Transverse colon (tissue), 4 donors: ENCODE measurements at regions of chr5 and their contacts with region 1.

Region 1: GRCh38 chr5:158943057-158943456 is 156.7 kb downstream of the EBF1 start:
- DNase-seq: no peak
- H3K4me3 ChIP-seq: no peak overlapping the region
- H3K27ac ChIP-seq: no peak overlapping the region
- H3K4me1 ChIP-seq: no peaks in the 10 kb centered on the region
- H3K27me3 ChIP-seq: no peaks in the 10 kb centered on the region
- CTCF ChIP-seq: no peak
- EP300 ChIP-seq: no peak
- POLR2A ChIP-seq: no peak

Region 2: GRCh38 chr5:157961828-157962590 is 981.0 kb before region 1 on chr5:
- in situ Hi-C with region 1: no loop called
- intact Hi-C with region 1: loop called (anchors 5 kb)
- DNase-seq: no peak
- H3K4me3 ChIP-seq: no peak overlapping the region
- H3K27ac ChIP-seq: no peak overlapping the region
- H3K4me1 ChIP-seq: no peaks in the 10 kb centered on the region
- H3K27me3 ChIP-seq: no peaks in the 10 kb centered on the region
- CTCF ChIP-seq: no peak
- EP300 ChIP-seq: no peak
- POLR2A ChIP-seq: no peak

Region 3: DNA sequence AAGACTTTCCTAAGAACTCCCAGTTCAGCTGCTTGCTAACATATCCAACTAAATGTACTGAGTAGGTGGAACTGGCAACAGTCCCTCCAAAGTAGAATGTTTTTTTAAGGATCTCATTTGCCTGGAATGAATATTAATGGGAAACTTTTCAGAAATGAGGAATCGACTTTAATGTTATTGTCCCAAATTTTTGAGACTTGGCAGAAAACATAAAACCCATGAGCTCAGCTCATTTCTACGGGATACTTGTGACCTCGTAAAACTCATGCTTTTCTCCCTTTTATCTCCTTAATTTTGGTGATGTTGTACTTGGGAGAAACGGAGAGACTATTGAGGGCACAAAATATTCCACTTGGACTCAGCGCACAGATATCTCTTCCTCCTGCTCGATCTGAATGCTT is 140.1 kb before region 1 on chr5:
- in situ Hi-C with region 1: no loop called
- intact Hi-C with region 1: no loop called
- DNase-seq: no peak
- H3K4me3 ChIP-seq: no peak overlapping the region
- H3K27ac ChIP-seq: no peak overlapping the region
- H3K4me1 ChIP-seq: no peaks in the 10 kb centered on the region
- H3K27me3 ChIP-seq: no peaks in the 10 kb centered on the region
- CTCF ChIP-seq: no peak
- EP300 ChIP-seq: no peak
- POLR2A ChIP-seq: no peak

Region 4: DNA sequence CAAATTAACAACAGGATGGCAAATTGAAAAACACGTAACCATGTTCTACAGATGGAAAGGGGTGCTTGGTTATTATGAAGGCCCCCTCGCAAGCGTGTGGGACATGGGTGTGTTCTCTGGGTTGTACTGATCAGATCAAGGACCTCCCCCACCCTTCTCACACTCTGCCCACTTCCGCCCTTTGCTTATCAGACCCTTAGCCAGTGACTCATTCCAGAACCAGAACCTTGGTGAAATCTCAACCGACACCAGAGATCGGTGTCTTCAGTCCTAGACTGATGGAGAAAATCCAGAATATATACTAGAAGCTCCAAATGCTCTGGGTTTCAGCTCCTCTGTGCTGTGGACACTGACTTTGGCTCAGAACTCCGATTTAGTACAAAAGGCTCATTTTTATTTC is 1543.5 kb after region 1 on chr5:
- in situ Hi-C with region 1: no loop called
- intact Hi-C with region 1: no loop called
- DNase-seq: no peak
- H3K4me3 ChIP-seq: no peak overlapping the region
- H3K27ac ChIP-seq: no peak overlapping the region
- H3K4me1 ChIP-seq: no peaks in the 10 kb centered on the region
- H3K27me3 ChIP-seq: no peaks in the 10 kb centered on the region
- CTCF ChIP-seq: no peak
- EP300 ChIP-seq: no peak
- POLR2A ChIP-seq: no peak